ENCODE measurements at regions of chr12 and their contacts with region 1.

Region 1: GRCh38 chr12:121494093-121494787 is 86.6 kb downstream of the KDM2B start:
- DNase-seq: peak; percentile 24
- ATAC-seq: peak; percentile 81
- H3K4me3 ChIP-seq: no peak overlapping the region
- H3K27ac ChIP-seq: no peak overlapping the region
- H3K4me1 ChIP-seq: no peaks in the 10 kb centered on the region
- H3K27me3 ChIP-seq: no peaks in the 10 kb centered on the region
- CTCF ChIP-seq: peak; percentile 96

Region 2: GRCh38 chr12:121475279-121475678 is 19.0 kb before region 1 on chr12:
- CTCF ChIA-PET with region 1: interaction called, 9 read pairs
- POLR2A ChIA-PET with region 1: interaction called, 12 read pairs
- in situ Hi-C with region 1: no loop called
- intact Hi-C with region 1: no loop called
- DNase-seq: no peak
- ATAC-seq: no peak
- H3K4me3 ChIP-seq: no peak overlapping the region
- H3K27ac ChIP-seq: no peak overlapping the region
- H3K4me1 ChIP-seq: no peaks in the 10 kb centered on the region
- H3K27me3 ChIP-seq: no peaks in the 10 kb centered on the region
- CTCF ChIP-seq: no peak

Measured in Panc1 (cell line).